ENCODE measurements at regions of chr2 and their contacts with region 1.

Region 1: GRCh38 chr2:65264821-65265670 is 37.4 kb downstream of the ACTR2 start:
- DNase-seq: peak; percentile 91
- ATAC-seq: peak; percentile 83
- H3K4me3 ChIP-seq: no peak overlapping the region
- H3K27ac ChIP-seq: no peak overlapping the region
- H3K4me1 ChIP-seq: peaks cover 8% of the 10 kb centered on the region
- H3K27me3 ChIP-seq: no peaks in the 10 kb centered on the region
- CTCF ChIP-seq: peak; percentile 77
- POLR2A ChIP-seq: 0 out of 2 replicates have a peak, but pooled peaks have one; percentile 28
- RAD21 ChIP-seq: peak; percentile 87

Region 2: GRCh38 chr2:65198737-65199136 is 66.3 kb before region 1 on chr2:
- CTCF ChIA-PET with region 1: no interaction called
- POLR2A ChIA-PET with region 1: no interaction called
- dilution Hi-C with region 1: no loop called
- in situ Hi-C with region 1: no loop called
- intact Hi-C with region 1: no loop called
- DNase-seq: peak; percentile 35
- ATAC-seq: no peak
- H3K4me3 ChIP-seq: no peak overlapping the region
- H3K27ac ChIP-seq: no peak overlapping the region
- H3K4me1 ChIP-seq: peaks cover 2% of the 10 kb centered on the region; the same call in 1 of the 2 replicates
- H3K27me3 ChIP-seq: no peaks in the 10 kb centered on the region
- CTCF ChIP-seq: no peak
- POLR2A ChIP-seq: no peak
- RAD21 ChIP-seq: no peak

Region 3: DNA sequence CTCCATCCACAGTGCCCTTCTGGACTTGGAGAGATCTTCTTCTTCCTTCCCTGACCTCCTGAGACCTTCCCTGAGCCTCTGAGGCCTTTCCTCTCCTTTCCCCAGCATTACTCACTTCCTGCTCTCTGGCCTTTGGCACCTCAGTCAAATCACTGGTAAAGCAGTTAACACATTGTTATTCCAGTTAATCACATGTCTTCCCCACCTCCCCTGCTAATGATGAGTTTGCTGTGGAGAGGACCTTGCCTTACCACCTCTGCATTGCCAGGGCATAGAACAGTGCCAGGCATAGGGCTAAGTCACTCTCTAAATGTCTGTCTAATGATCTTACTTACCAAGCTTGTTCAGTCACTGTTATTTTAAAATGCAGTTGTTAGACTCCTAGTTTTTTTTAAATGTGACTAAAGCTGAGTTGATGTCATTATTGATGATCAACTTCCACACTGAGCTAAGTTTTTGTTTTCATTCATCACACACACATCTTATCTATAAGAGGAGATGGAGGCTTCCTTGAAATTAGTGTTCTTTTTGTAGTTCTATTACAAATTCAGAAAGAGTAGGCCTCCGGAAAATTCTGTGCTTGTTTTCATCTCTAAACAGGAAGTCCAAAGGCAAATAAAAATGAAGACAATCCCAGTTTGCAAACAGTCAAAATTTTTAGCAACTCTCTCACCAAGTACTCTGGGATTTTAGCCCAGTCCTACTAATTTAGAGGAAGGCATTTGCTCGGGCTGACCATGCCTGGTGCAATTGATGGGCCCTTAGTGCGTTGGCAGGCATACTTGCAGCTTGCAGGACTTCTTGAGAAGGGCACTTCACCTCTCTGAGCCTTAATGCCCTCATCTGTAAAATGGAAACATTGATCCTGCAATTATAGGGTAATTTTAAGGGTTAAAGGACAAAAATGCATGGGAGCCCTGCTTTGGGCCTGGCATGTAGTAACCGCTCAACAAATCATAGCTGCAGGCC is 281.1 kb after region 1 on chr2:
- CTCF ChIA-PET with region 1: interaction called, 5 read pairs
- POLR2A ChIA-PET with region 1: no interaction called
- dilution Hi-C with region 1: no loop called
- in situ Hi-C with region 1: loop called (anchors 5 kb)
- intact Hi-C with region 1: no loop called
- DNase-seq: peak; percentile 10
- ATAC-seq: peak; percentile 69
- H3K4me3 ChIP-seq: no peak overlapping the region
- H3K27ac ChIP-seq: no peak overlapping the region
- H3K4me1 ChIP-seq: peaks cover 5% of the 10 kb centered on the region
- H3K27me3 ChIP-seq: no peaks in the 10 kb centered on the region
- CTCF ChIP-seq: no peak
- POLR2A ChIP-seq: no peak
- RAD21 ChIP-seq: no peak